ENCODE measurements at regions of chr18 and their contacts with region 1.

Region 1: DNA sequence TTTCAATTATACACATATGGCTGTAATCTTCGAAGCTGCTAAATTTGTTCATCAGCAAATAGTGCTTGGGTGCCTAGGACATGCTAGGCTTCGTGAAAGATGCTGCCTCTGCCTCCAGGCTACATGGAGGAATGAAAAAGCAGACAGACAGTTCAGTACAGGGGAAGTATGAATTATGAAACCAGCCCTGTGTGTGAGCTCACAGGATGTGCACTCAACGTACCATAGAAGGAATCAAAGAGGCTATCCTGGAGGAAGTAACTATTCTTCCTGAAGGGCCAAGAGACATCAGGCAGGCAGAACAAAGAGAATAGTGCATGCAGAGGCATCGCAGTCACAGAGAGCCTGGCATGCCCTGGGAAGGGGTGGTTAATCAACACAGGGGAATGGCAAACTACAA is 61.4 kb downstream of the DYM start:
- DNase-seq: no peak
- H3K4me3 Mint-ChIP-seq: no peak overlapping the region
- H3K27ac Mint-ChIP-seq: no peak overlapping the region
- H3K4me1 Mint-ChIP-seq: peaks cover 39% of the 10 kb centered on the region
- H3K27me3 Mint-ChIP-seq: no peaks in the 10 kb centered on the region
- CTCF ChIP-seq: no peak

Region 2: DNA sequence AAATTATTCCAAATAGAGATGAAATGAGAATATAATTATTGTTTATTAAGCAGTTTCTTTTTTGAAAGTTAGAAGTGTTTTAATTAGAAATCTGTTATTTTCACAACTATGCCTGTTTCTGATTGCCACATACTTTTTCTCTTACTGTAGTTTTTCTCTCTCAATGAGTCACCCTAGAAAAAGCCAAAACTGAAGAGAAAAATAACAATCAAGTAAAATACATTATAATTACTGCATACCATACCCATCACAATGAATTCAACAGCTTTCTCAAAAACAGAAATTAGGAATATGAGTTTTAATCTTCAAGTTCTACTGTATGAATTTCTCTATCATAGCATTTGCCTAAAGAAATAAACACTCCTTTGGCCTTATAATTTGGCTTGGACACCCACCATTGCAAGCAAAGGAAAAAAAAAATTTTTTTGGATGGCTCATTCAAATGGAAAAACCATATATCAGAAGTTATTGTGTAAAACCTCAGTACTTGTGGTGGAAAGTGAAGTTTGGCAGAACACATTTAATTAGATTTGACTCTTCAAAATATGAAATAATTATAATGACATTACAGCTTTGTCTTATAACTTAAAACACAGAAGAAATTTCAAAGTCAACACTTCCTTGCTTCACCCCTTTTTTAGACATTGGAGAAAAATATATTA is 77.1 kb before region 1 on chr18:
- CTCF ChIA-PET with region 1: interaction called, 15 read pairs
- intact Hi-C with region 1: no loop called
- DNase-seq: no peak
- H3K4me3 Mint-ChIP-seq: no peak overlapping the region
- H3K27ac Mint-ChIP-seq: no peak overlapping the region
- H3K4me1 Mint-ChIP-seq: peaks cover 12% of the 10 kb centered on the region
- H3K27me3 Mint-ChIP-seq: no peaks in the 10 kb centered on the region
- CTCF ChIP-seq: no peak

Region 3: DNA sequence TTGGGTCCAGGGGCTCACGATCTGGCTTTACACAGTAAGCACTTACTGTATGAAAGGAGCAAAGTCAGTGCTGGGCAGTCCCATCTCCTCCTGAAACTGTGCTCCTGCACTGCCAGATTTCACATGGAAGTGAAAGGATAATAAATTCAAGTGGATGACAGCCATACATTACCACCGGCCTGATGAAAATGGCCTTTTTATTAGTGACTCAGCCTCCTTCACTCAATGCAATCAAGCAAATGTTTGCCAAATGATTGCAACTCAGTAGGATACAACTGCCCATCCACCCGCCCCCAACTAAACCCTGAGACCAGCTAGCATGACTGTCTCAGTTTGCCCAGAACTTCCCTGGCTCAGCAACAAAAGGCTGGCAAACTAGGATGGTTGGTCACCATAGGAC is 718.9 kb after region 1 on chr18:
- CTCF ChIA-PET with region 1: no interaction called
- intact Hi-C with region 1: no loop called
- DNase-seq: no peak
- H3K4me3 Mint-ChIP-seq: no peak overlapping the region
- H3K27ac Mint-ChIP-seq: no peak overlapping the region
- H3K4me1 Mint-ChIP-seq: peaks cover 36% of the 10 kb centered on the region
- H3K27me3 Mint-ChIP-seq: no peaks in the 10 kb centered on the region
- CTCF ChIP-seq: no peak

Measured in Calu3 (cell line).